Naive thymus-derived CD4-positive, alpha-beta T cell (primary cell): ENCODE measurements at regions of chr12 and their contacts with region 1.

Region 1: GRCh38 chr12:2794736-2795289 is at the start of gene FKBP4:
- DNase-seq: peak; percentile 77 to 92 (median 86)
- ATAC-seq: peak; percentile 95
- H3K4me3 ChIP-seq: peak within 1 kb of the TSS; percentile 95
- H3K4me3 Mint-ChIP-seq: peak within 1 kb of the TSS; percentile 88 to 97 (median 94)
- H3K27ac ChIP-seq: peak within 1 kb of the TSS; percentile 73
- H3K27ac Mint-ChIP-seq: peak within 1 kb of the TSS; percentile 48 to 93 (median 84)
- H3K4me1 ChIP-seq: peaks cover 8 to 11% of the 10 kb centered on the region in 2 donors
- H3K4me1 Mint-ChIP-seq: peaks cover 17 to 37% (median 31%) of the 10 kb centered on the region in 7 donors
- H3K27me3 ChIP-seq: no peaks in the 10 kb centered on the region
- H3K27me3 Mint-ChIP-seq: peaks cover 0 to 21% (median 0%) of the 10 kb centered on the region in 5 donors
- total RNA-seq, gene FKBP4: 47.4 to 95.4 (median 54.6) TPM

Region 2: GRCh38 chr12:2691006-2691344 is 103.8 kb before region 1 on chr12:
- CTCF ChIA-PET with region 1: interaction called, 3 read pairs
- POLR2A ChIA-PET with region 1: interaction called, 41 read pairs
- intact Hi-C with region 1: loop called in 1 of 2 experiments (anchors 1 kb)
- DNase-seq: peak in 8 of 9 donors; percentile 36 to 66 (median 56)
- ATAC-seq: peak; percentile 75
- H3K4me3 ChIP-seq: peak overlapping the region; percentile 92
- H3K4me3 Mint-ChIP-seq: peak overlapping the region; percentile 88 to 100 (median 93)
- H3K27ac ChIP-seq: peak overlapping the region; percentile 79
- H3K27ac Mint-ChIP-seq: peak overlapping the region; percentile 60 to 93 (median 86)
- H3K4me1 ChIP-seq: peaks cover 15 to 22% of the 10 kb centered on the region in 2 donors
- H3K4me1 Mint-ChIP-seq: peaks cover 36 to 57% (median 49%) of the 10 kb centered on the region in 7 donors
- H3K27me3 ChIP-seq: no peaks in the 10 kb centered on the region
- H3K27me3 Mint-ChIP-seq: peaks cover 0 to 12% (median 1%) of the 10 kb centered on the region in 5 donors

Region 3: GRCh38 chr12:2877047-2877952 is 82.5 kb after region 1 on chr12 and contains the starts of genes FOXM1 and RHNO1:
- CTCF ChIA-PET with region 1: no interaction called
- POLR2A ChIA-PET with region 1: interaction called, 6 read pairs
- intact Hi-C with region 1: loop called (anchors 1 to 2 kb)
- DNase-seq: peak; percentile 79 to 92 (median 88)
- ATAC-seq: peak; percentile 87
- H3K4me3 ChIP-seq: peak within 1 kb of the TSS; percentile 83
- H3K4me3 Mint-ChIP-seq: peak within 1 kb of the TSS; percentile 89 to 100 (median 98)
- H3K27ac ChIP-seq: peak within 1 kb of the TSS; percentile 94
- H3K27ac Mint-ChIP-seq: peak within 1 kb of the TSS; percentile 98 to 100 (median 99)
- H3K4me1 ChIP-seq: peaks cover 10 to 14% of the 10 kb centered on the region in 2 donors
- H3K4me1 Mint-ChIP-seq: peaks cover 21 to 54% (median 45%) of the 10 kb centered on the region in 7 donors
- H3K27me3 ChIP-seq: no peaks in the 10 kb centered on the region
- H3K27me3 Mint-ChIP-seq: no peaks in the 10 kb centered on the region
- total RNA-seq, gene FOXM1: 0.35 to 77.2 (median 0.82) TPM in 4 of 5 experiments, not detected in the other
- total RNA-seq, gene RHNO1: 13.7 to 44.3 (median 28.7) TPM

Region 4: GRCh38 chr12:2944401-2945047 is 149.7 kb after region 1 on chr12:
- CTCF ChIA-PET with region 1: no interaction called
- POLR2A ChIA-PET with region 1: no interaction called
- intact Hi-C with region 1: loop called in 1 of 2 experiments (anchors 10 kb)
- DNase-seq: peak; percentile 4 to 58 (median 40)
- ATAC-seq: peak; percentile 65
- H3K4me3 ChIP-seq: no peak overlapping the region
- H3K4me3 Mint-ChIP-seq: peak overlapping the region in 4 of 10 donors; percentile 32 to 56 (median 38)
- H3K27ac ChIP-seq: no peak overlapping the region
- H3K27ac Mint-ChIP-seq: no peak overlapping the region
- H3K4me1 ChIP-seq: no peaks in the 10 kb centered on the region
- H3K4me1 Mint-ChIP-seq: peaks cover 0 to 5% (median 4%) of the 10 kb centered on the region in 7 donors
- H3K27me3 ChIP-seq: no peaks in the 10 kb centered on the region
- H3K27me3 Mint-ChIP-seq: peaks cover 3 to 5% (median 4%) of the 10 kb centered on the region in 5 donors

Region 5: GRCh38 chr12:3085341-3086125 is 290.7 kb after region 1 on chr12:
- CTCF ChIA-PET with region 1: no interaction called
- POLR2A ChIA-PET with region 1: no interaction called
- intact Hi-C with region 1: no loop called
- DNase-seq: peak in 1 of 9 donors; percentile 7
- ATAC-seq: no peak
- H3K4me3 ChIP-seq: no peak overlapping the region
- H3K4me3 Mint-ChIP-seq: no peak overlapping the region
- H3K27ac ChIP-seq: no peak overlapping the region
- H3K27ac Mint-ChIP-seq: peak overlapping the region in 1 of 9 donors; percentile 8
- H3K4me1 ChIP-seq: no peaks in the 10 kb centered on the region
- H3K4me1 Mint-ChIP-seq: peaks cover 0 to 9% (median 4%) of the 10 kb centered on the region in 7 donors
- H3K27me3 ChIP-seq: no peaks in the 10 kb centered on the region
- H3K27me3 Mint-ChIP-seq: peaks cover 0 to 5% (median 0%) of the 10 kb centered on the region in 5 donors

Region 6: DNA sequence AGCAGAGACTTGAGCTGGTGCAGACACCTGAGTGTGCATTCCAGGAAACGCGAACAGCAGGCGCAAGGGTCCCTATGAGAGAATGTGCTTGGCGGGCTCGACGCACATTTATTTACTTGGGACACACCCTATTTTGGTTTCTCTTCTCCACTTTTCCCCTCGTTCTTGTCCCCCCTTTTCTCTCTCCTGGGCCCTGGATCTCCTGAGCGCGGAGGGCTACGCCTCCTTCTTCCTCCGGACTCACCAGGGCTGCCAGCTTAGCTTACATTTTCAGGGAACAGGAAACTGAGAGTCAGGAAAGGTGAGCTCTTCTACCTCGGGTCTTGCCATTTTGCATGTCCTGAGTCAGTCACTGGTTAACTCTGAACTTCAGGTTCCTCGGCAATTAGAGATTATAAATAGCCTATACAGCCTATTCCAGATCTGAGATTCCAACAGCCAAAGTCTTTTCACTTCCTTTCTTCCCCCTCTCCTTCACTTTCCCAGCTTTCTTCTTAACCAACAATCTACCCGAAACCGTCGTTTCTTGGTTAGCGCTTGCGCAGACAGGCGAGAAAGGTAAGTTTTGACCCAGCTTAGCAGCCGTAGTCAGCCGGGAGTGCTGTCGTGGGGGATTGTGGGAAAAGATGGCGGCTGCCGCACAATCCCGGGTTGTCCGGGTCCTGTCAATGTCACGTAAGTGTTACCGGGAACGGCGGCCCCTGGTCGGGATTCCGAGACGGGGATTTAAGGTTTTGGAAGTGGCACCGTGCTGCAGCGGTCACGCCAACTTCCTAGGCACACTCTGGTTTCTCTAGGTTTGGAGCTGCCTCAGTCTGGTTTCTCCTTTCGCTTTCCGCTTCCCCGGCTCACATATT is 1853.9 kb after region 1 on chr12 and contains the starts of genes AKAP3 and NDUFA9:
- CTCF ChIA-PET with region 1: no interaction called
- POLR2A ChIA-PET with region 1: no interaction called
- intact Hi-C with region 1: loop called in 1 of 2 experiments (anchors 5 kb)
- DNase-seq: peak; percentile 53 to 87 (median 84)
- ATAC-seq: peak; percentile 97
- H3K4me3 ChIP-seq: peak within 1 kb of the TSS; percentile 92
- H3K4me3 Mint-ChIP-seq: peak within 1 kb of the TSS; percentile 88 to 99 (median 97)
- H3K27ac ChIP-seq: peak within 1 kb of the TSS; percentile 80
- H3K27ac Mint-ChIP-seq: peak within 1 kb of the TSS; percentile 90 to 99 (median 95)
- H3K4me1 ChIP-seq: peaks cover 14 to 15% of the 10 kb centered on the region in 2 donors
- H3K4me1 Mint-ChIP-seq: peaks cover 24 to 58% (median 46%) of the 10 kb centered on the region in 7 donors
- H3K27me3 ChIP-seq: no peaks in the 10 kb centered on the region
- H3K27me3 Mint-ChIP-seq: peaks cover 0 to 13% (median 0%) of the 10 kb centered on the region in 5 donors
- total RNA-seq, gene AKAP3: 1.2 to 6.9 (median 2.5) TPM
- total RNA-seq, gene NDUFA9: 55.5 to 103 (median 58.2) TPM